ENCODE measurements at regions of chr12 and their contacts with region 1.

Region 1: GRCh38 chr12:11545484-11546330 is 103.8 kb upstream of the ETV6 start:
- DNase-seq: peak; percentile 87 to 92 (median 89)
- H3K4me3 ChIP-seq: peak overlapping the region in 4 of 7 experiments; percentile 8 to 28 (median 21)
- H3K27ac ChIP-seq: peak overlapping the region; percentile 80 to 88
- H3K4me1 ChIP-seq: peaks cover 13 to 40% (median 35%) of the 10 kb centered on the region in 4 experiments
- H3K27me3 ChIP-seq: no peaks in the 10 kb centered on the region

Region 2: GRCh38 chr12:11508699-11509098 is 37.0 kb before region 1 on chr12:
- CTCF ChIA-PET with region 1: interaction called, 12 read pairs
- POLR2A ChIA-PET with region 1: no interaction called
- DNase-seq: no peak
- H3K4me3 ChIP-seq: no peak overlapping the region
- H3K27ac ChIP-seq: no peak overlapping the region
- H3K4me1 ChIP-seq: peaks cover 4 to 28% (median 22%) of the 10 kb centered on the region in 4 experiments
- H3K27me3 ChIP-seq: no peaks in the 10 kb centered on the region